H1 (cell line): ENCODE measurements at regions of chr7 and their contacts with region 1.

Region 1: DNA sequence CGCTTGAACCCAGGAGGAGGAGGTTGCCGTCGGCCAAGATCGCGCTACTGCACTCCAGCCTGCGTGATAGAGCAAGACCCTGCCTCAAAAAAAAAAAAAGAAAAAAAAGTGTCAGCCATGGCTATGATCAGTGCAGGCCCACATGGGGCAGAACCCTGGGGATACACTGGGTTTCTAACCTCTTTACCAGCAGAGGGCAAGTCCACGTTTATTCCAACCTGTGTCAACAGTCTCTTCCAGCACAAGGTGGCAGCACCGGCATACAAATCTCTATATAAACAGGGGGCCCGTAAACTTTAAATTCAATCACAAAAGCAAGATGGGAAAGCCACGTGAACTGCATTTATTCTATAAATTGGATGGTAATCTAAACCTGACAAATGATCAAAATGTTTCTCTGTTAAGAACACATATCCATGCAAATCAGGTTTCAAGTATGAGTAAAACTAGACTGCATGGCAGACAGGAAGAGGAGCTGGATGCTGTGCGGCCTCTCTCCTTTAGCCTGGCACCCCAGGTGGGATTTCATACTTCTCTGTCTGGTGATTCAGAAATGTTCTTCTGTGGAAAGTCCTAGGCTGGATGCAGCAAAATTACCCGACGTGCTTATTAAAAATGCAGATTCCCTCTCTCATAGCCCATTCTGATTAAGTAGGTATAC is 60.0 kb upstream of the STEAP1B start:
- DNase-seq: peak in 1 of 2 experiments; percentile 73
- H3K4me3 ChIP-seq: no peak overlapping the region
- H3K27ac ChIP-seq: no peak overlapping the region
- H3K4me1 ChIP-seq: peaks cover 8 to 34% (median 25%) of the 10 kb centered on the region in 4 experiments
- H3K27me3 ChIP-seq: no peaks in the 10 kb centered on the region
- CTCF ChIP-seq: peak; percentile 63 to 99 (median 91)
- EP300 ChIP-seq: no peak
- POLR2A ChIP-seq: no peak
- RAD21 ChIP-seq: peak; percentile 94 to 98

Region 2: GRCh38 chr7:22542669-22543068 is 17.3 kb before region 1 on chr7:
- CTCF ChIA-PET with region 1: interaction called, 10 read pairs
- POLR2A ChIA-PET with region 1: no interaction called
- DNase-seq: peak in 1 of 2 experiments; percentile 20
- H3K4me3 ChIP-seq: no peak overlapping the region
- H3K27ac ChIP-seq: no peak overlapping the region
- H3K4me1 ChIP-seq: no peaks in the 10 kb centered on the region
- H3K27me3 ChIP-seq: no peaks in the 10 kb centered on the region
- CTCF ChIP-seq: no peak
- EP300 ChIP-seq: no peak
- POLR2A ChIP-seq: no peak
- RAD21 ChIP-seq: no peak

Region 3: GRCh38 chr7:22597845-22598244 is 37.9 kb after region 1 on chr7:
- CTCF ChIA-PET with region 1: interaction called, 26 read pairs
- POLR2A ChIA-PET with region 1: interaction called, 4 read pairs
- DNase-seq: no peak
- H3K4me3 ChIP-seq: no peak overlapping the region
- H3K27ac ChIP-seq: no peak overlapping the region
- H3K4me1 ChIP-seq: peaks cover 0 to 3% (median 0%) of the 10 kb centered on the region in 4 experiments; a peak in 1 of 7 replicates
- H3K27me3 ChIP-seq: no peaks in the 10 kb centered on the region
- CTCF ChIP-seq: no peak
- EP300 ChIP-seq: no peak
- POLR2A ChIP-seq: no peak
- RAD21 ChIP-seq: no peak

Region 4: GRCh38 chr7:22712999-22713398 is 153.0 kb after region 1 on chr7:
- CTCF ChIA-PET with region 1: interaction called, 11 read pairs
- POLR2A ChIA-PET with region 1: interaction called, 3 read pairs
- DNase-seq: no peak
- H3K4me3 ChIP-seq: no peak overlapping the region
- H3K27ac ChIP-seq: no peak overlapping the region
- H3K4me1 ChIP-seq: peaks cover 4 to 9% (median 5%) of the 10 kb centered on the region in 4 experiments; a peak in 6 of 7 replicates
- H3K27me3 ChIP-seq: no peaks in the 10 kb centered on the region
- CTCF ChIP-seq: no peak
- EP300 ChIP-seq: no peak
- POLR2A ChIP-seq: no peak
- RAD21 ChIP-seq: no peak

Region 5: GRCh38 chr7:22776964-22777363 is 217.0 kb after region 1 on chr7:
- CTCF ChIA-PET with region 1: interaction called, 41 read pairs
- POLR2A ChIA-PET with region 1: no interaction called
- DNase-seq: no peak
- H3K4me3 ChIP-seq: no peak overlapping the region
- H3K27ac ChIP-seq: no peak overlapping the region
- H3K4me1 ChIP-seq: no peaks in the 10 kb centered on the region
- H3K27me3 ChIP-seq: no peaks in the 10 kb centered on the region
- CTCF ChIP-seq: no peak
- EP300 ChIP-seq: no peak
- POLR2A ChIP-seq: no peak
- RAD21 ChIP-seq: no peak

Region 6: DNA sequence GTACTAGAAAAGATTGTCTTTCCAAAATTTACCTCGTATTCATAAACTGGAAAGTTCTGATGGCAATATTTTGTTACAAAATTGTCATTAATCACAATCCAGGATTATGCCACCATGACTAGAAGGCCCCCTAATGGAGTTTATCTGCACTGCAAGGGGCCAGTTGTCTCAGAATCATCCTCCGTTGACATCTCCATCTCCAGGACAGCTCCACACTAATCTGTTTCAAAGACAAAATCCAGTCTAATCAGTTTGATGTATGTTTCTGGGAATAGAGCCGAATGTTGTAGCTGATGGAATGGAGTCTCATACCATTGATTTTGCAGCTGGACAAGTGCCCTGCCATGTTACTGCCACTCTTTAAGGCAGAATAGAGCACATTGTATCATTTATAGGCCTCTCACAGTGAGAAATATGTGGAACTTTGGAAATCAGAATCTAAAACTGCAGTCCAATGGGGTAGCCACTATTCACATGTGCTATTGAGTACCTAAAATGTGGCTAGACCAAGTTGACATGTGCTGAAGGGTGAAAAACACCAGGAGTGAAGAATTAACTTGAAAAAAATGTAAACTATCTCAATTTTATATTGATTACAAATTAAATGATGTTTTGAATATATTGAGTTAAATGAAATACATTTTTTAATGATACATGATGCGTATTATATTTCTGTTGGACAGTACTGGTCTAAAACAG is 301.0 kb after region 1 on chr7:
- CTCF ChIA-PET with region 1: interaction called, 24 read pairs
- POLR2A ChIA-PET with region 1: interaction called, 5 read pairs
- DNase-seq: no peak
- H3K4me3 ChIP-seq: no peak overlapping the region
- H3K27ac ChIP-seq: no peak overlapping the region
- H3K4me1 ChIP-seq: peaks cover 0 to 13% (median under 1%) of the 10 kb centered on the region in 4 experiments; a peak in 5 of 7 replicates
- H3K27me3 ChIP-seq: no peaks in the 10 kb centered on the region
- CTCF ChIP-seq: peak; percentile 32 to 62 (median 39); a peak in 3 of 4 replicates
- EP300 ChIP-seq: no peak
- POLR2A ChIP-seq: no peak; a peak in 1 of 3 replicates
- RAD21 ChIP-seq: peak; percentile 43 to 59